Activated CD4-positive, alpha-beta T cell treated with anti-CD3 and anti-CD28 coated beads, Interleukin-2, amount 10 ng/mL, durations not matched to agents 7 days and 5 days (primary cell): ENCODE measurements at regions of chr19 and their contacts with region 1.

Region 1: GRCh38 chr19:33125929-33126388 is 6.0 kb upstream of the WDR88 start:
- DNase-seq: peak; percentile 70
- H3K4me3 Mint-ChIP-seq: no peak overlapping the region
- H3K27ac Mint-ChIP-seq: no peak overlapping the region
- H3K4me1 Mint-ChIP-seq: peaks cover 12% of the 10 kb centered on the region
- H3K27me3 Mint-ChIP-seq: no peaks in the 10 kb centered on the region

Region 2: GRCh38 chr19:33186431-33187182 is 60.6 kb after region 1 on chr19:
- CTCF ChIA-PET with region 1: interaction called, 10 read pairs
- POLR2A ChIA-PET with region 1: no interaction called
- DNase-seq: no peak
- H3K4me3 Mint-ChIP-seq: no peak overlapping the region
- H3K27ac Mint-ChIP-seq: no peak overlapping the region
- H3K4me1 Mint-ChIP-seq: peaks cover 6% of the 10 kb centered on the region
- H3K27me3 Mint-ChIP-seq: peaks cover 17% of the 10 kb centered on the region